GM10248 (cell line): ENCODE measurements at regions of chr22 and their contacts with region 1.

Region 1: DNA sequence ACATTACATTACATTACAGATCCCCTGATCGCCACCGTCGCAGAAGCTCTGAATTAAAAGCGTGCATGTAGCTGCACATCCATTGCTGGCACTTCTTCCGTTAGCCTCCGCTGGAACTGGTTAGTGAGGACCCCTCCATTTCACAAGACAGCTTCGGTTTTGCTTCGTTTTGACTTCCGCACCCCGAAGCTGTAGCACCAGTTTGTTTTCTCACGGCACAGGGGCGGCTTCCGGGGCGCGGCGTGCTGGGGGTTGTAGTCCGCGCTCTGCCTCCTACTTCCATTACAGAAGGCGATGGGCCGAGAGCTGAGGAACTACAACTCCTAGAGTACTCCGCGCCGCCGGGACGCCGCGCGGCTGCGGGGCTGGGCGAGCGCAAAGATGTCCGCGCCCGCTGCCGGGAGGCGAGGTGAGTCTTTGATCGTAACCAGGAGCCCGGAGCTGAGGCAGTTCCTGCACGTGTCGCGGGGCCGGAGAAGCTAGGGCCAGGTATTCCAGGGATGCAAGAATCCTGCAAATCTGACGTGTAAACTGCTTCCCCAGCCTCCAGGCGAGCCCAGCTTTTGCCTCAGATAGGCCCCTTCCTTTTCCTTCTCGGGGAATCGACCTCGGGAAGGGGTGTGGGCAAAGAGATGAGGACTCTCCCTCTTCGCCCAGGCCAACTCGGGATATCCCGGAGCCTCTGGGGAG is at the start of gene PEX26:
- DNase-seq: peak; percentile 95
- CTCF ChIP-seq: no peak

Region 2: DNA sequence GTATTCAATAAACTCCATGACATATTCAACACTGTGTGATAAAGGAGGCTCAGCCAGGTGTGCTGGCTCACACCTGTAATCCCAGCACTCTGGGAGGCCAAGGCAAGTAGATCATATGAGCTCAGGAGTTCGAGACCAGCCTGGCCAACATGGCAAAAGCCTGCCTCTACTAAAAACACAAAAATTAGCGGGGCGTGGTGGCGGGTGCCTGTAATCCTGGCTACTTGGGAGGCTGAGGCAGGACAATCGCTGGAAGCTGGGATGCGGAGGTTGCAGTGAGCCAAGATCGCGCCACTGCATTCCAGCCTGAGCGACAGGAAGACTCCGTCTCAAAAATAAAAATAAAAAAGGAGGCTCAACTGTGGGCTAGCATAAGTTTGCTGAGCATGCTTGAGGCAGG is 518.6 kb before region 1 on chr22:
- CTCF ChIA-PET with region 1: interaction called, 11 read pairs
- POLR2A ChIA-PET with region 1: no interaction called
- DNase-seq: no peak
- CTCF ChIP-seq: no peak

Region 3: DNA sequence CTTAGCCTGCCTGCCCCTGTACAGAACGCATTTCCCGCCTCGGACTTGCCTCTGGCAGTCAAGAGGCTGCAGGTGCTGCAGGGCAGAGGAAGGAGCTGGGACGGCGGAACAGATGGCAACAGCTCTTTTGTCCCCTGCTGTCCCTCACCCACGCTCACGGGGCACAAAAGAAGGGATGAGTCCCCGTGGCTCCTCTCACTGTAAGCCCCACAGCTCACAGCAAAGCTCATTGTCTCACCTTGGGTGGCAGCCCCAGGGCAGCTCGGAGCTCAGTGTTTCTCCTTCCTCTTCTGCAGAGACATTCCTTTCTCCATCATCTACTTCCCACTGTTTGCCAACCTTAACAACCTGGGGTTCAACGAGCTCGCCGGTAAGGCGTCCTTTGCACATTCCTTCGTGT is 490.2 kb before region 1 on chr22:
- CTCF ChIA-PET with region 1: no interaction called
- POLR2A ChIA-PET with region 1: no interaction called
- DNase-seq: no peak
- CTCF ChIP-seq: no peak

Region 4: DNA sequence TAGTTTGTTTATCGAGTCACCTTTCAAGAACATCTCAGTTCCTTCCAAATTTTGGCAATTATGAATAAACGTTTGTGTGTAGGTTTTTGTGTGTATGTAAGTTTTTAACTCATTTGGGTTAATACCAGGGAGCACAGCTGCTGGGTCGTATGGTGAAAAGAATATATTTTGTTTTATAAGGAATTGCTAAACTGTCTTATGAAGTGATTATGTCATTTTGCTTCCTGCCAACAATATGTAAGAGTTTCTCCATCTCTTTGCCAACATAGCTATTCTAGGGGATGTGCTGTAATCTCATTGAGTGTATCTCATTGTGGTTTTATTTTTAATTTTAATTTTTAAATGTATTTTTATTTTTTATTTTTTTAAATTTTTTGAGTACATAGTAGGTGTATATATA is 411.9 kb before region 1 on chr22:
- CTCF ChIA-PET with region 1: no interaction called
- POLR2A ChIA-PET with region 1: no interaction called
- DNase-seq: no peak
- CTCF ChIP-seq: no peak

Region 5: DNA sequence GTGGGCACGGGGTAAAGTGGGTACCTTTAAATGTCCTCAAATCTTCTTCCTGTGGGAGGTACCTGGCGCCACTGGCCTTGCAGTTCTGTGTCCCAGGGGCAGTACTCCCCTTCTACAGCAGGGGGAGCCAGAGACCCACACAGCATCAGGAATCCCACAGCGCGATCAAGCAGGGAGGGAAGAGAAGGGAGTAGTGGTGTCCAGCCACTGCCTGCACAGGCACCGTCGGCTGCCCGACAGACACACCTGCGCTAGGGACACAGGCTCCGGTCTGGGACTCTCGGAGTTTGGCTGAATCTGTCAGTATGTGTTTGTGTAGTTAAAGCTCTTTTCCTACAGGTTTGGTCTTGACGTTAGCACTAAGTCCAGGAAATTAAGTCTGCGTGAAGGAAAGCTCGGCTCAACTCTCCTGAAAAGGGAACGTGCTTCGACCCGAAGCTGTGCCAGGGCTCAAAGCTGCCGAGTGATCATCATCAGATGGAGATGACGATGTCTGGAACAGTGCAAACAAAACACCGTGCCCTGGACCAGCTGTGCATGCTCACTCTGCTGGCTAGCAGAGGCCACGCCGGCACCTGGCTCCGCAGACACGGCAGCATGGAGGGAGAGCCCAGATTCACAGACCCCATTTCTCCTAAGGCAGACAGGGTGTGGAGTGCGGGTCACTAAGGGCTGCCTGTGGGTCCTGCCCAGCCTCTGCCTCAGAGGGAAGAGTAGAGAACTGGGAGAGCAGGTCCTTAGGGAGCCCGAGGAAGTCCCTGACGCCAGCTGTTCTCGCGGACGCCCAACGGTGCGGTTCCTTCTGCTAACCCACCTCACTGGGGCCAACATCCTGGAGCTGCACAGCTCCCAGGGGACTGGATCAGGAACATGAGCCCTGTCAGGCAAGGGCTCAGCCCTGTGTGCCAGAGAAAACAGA is 247.5 kb before region 1 on chr22:
- CTCF ChIA-PET with region 1: interaction called, 249 read pairs
- POLR2A ChIA-PET with region 1: no interaction called
- DNase-seq: peak; percentile 89
- CTCF ChIP-seq: peak; percentile 98

Region 6: DNA sequence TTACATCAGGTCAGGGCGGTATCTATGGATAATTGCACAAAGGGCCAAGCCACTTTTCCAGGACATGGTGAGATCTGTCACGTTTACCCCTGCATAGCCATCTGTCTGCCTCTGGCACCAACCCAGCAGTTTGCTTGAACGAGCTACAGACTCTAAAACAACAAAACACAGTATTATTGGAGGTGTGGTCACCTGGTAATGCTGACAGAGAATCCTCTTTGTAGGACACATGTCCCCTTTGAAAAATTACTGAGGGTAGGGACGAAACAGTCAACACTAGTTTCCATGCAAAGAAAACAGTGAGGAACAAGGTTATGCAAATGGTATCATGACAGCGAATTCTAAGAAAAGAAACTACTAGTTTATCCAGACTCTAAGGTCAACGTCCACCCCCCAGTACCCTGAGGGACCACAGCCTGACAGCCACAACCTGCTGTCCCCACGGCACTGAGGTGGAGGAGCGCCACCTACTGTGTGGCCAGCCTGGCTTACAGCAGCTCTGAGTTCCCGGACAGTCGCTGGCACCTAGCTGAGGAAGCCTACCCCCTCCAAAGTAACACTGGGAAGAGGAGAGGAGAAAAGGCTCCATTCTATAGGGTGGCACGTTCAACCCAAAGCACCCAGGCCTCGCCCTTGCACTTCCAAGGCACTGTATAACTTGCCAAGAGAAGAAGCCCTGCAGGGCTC is 186.2 kb before region 1 on chr22:
- CTCF ChIA-PET with region 1: interaction called, 17 read pairs
- POLR2A ChIA-PET with region 1: no interaction called
- DNase-seq: peak; percentile 45
- CTCF ChIP-seq: peak; percentile 47

Region 7: DNA sequence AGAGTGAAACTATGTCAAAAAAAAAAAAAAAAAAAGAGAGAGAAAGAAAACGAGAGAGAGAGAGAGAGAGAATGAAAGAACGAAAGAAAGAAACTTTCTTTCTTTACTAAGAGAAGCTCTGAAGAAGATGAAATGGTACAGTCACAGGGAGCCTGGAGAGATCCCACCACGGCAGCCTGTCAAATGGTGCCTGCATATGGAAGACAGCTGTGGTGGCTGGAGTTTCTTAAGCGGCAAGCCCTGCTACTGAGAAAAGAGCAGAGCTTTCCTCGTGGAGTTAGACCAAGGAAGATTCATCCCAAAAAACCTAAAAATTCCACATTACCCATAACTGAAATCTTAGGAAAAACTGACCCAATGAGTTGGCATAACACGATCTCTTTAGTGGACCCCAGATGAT is 120.1 kb before region 1 on chr22:
- CTCF ChIA-PET with region 1: interaction called, 16 read pairs
- POLR2A ChIA-PET with region 1: no interaction called
- DNase-seq: no peak
- CTCF ChIP-seq: no peak

Region 8: GRCh38 chr22:18024276-18024947 is 53.4 kb before region 1 on chr22 and contains the start of gene MICAL3:
- CTCF ChIA-PET with region 1: interaction called, 18 read pairs
- POLR2A ChIA-PET with region 1: no interaction called
- DNase-seq: peak; percentile 87
- CTCF ChIP-seq: peak; percentile 94

Region 9: GRCh38 chr22:18065256-18065655 is 12.5 kb before region 1 on chr22:
- CTCF ChIA-PET with region 1: interaction called, 91 read pairs
- POLR2A ChIA-PET with region 1: no interaction called
- DNase-seq: no peak
- CTCF ChIP-seq: no peak